MCF 10A (cell line): ENCODE measurements at regions of chr11 and their contacts with region 1.

Region 1: DNA sequence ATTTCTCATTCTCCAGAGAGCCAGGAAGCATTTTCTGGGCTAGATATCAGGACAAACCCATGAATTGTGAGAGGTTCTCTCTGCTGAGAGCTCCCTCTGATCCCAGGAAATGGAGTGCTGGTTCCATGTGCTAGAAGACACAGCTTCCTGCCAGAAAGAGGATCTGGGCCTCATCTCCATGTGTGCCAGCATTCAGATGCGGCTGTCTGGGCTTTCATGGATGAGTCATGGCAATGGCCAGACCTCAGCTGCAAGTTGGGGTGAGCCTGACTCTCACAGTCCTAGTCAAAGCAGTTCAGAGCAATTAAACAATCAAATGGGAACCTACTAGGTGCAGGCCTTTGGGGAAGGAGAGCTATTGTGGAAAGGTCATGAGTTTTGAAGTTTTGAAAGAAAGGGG is 82.3 kb upstream of the EED start:
- DNase-seq: peak; percentile 76
- H3K4me3 Mint-ChIP-seq: no peak overlapping the region
- H3K27ac Mint-ChIP-seq: peak overlapping the region; percentile 28
- H3K4me1 Mint-ChIP-seq: peaks cover 34% of the 10 kb centered on the region
- H3K27me3 Mint-ChIP-seq: no peaks in the 10 kb centered on the region
- CTCF ChIP-seq: no peak

Region 2: DNA sequence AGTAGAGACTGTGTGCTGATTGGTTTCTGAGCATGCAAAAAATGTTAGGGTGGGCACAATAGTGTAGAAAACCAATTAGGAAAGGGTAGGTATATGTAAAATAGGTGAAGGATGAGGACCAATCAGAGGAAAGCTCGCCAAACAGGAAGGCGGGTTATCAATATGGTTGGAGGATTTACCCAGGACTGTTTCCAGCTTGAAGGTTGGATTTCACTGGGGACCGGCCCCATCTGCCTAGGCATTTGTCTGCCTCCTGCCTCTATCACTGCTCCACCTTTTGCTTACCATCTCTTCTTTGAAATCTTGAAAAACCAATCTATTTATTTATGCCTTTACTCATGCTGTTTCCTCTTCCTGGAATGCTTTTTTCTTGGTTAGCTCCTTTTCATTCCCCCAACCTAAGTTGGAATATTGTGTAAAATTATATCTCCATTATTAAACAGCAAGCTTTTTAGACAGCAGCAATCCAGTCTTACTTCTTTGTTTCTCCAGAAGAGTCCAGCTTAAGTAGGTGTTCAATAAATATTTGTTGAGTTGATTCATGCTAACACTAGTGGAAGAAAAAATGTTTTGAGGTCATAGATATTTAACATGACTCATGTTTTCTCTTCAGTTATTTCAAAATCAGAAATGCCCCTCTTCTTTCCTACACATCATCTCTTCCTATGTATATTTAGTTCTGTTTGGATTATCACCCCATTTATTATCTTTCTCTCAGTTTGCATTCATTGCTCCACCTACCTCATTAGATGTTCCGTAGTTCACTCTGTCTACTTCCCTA is 286.9 kb before region 1 on chr11:
- CTCF ChIA-PET with region 1: no interaction called
- POLR2A ChIA-PET with region 1: no interaction called
- intact Hi-C with region 1: no loop called
- DNase-seq: peak; percentile 11
- H3K4me3 Mint-ChIP-seq: no peak overlapping the region
- H3K27ac Mint-ChIP-seq: no peak overlapping the region
- H3K4me1 Mint-ChIP-seq: peaks cover 19% of the 10 kb centered on the region
- H3K27me3 Mint-ChIP-seq: no peaks in the 10 kb centered on the region
- CTCF ChIP-seq: no peak

Region 3: DNA sequence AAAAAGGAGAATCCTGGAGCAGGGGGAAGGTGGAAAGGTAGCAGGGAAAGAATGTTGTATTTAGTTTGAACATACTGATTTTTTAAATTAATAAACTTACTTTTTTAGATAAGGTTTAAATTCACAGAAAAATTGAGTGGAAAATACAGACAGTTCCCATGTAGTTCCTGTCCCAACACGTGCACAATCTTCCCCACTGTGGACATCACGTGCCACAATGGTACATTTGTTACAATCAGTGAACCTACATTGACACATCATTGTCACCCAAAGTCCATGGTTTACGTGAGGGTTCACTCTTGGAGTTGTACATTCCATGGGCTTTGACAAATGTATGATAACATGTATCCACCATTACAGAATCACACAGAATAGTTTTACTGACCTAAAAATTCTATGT is 82.8 kb before region 1 on chr11:
- CTCF ChIA-PET with region 1: no interaction called
- POLR2A ChIA-PET with region 1: no interaction called
- intact Hi-C with region 1: no loop called
- DNase-seq: no peak
- H3K4me3 Mint-ChIP-seq: no peak overlapping the region
- H3K27ac Mint-ChIP-seq: no peak overlapping the region
- H3K4me1 Mint-ChIP-seq: no peaks in the 10 kb centered on the region
- H3K27me3 Mint-ChIP-seq: no peaks in the 10 kb centered on the region
- CTCF ChIP-seq: no peak

Region 4: DNA sequence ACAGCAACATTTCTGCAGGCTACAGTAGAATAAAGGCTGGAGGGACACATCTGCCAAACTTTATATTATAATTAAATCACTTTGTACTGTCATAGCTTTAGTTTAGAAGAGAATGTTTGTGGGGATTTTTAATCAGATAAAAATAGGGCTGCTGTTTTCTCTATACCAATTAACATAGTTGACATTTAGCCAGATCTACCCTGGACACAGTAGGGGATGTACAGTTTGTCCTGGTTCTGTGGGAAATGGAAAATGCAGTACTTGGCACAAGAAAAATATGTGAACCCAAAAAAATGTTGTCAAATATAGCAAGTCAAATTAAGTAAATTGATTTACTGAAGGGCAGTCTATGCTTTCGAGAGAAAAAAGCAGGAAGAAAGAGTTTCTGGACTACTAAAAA is 72.6 kb before region 1 on chr11:
- CTCF ChIA-PET with region 1: no interaction called
- POLR2A ChIA-PET with region 1: no interaction called
- intact Hi-C with region 1: no loop called
- DNase-seq: no peak
- H3K4me3 Mint-ChIP-seq: no peak overlapping the region
- H3K27ac Mint-ChIP-seq: no peak overlapping the region
- H3K4me1 Mint-ChIP-seq: no peaks in the 10 kb centered on the region
- H3K27me3 Mint-ChIP-seq: no peaks in the 10 kb centered on the region
- CTCF ChIP-seq: no peak

Region 5: DNA sequence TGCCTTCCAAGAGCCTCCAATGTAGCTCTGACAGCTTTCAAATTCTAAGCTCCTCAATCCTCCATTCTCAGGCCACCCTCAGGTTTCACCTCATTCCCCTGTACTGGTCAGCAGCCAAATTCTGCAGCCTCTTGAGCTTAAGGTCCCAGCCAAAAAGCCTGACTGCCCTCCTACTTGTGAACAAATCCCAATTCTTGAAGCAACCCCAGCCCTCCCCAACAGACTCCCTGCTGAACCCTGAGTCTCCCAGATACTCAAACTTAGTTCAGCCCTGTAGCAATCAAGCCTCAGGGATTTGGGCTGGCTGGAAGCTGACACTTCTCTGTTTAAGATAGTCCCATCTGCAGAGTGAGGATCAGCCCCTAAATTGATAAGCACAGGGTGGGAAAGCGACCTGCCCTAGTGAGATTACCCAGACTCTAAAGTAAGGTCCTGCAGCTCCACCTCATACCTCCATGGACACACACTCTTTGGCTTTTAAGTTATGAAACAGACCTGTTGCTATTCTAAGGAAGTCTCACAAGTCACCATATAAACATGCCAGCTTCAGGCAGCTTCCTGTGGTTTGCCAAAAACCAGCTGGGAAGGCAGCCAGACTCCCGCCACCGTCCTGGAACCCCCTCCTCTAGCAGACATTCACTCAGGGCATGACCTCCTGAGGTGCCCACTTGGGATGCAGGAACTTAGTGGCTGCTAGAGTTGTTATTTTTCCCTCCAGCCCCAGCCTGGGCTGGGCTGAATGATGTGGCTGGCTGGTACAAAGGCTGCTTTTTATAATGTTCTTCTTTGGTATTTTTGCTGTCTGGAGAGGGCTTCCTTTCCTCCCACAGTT is 10.8 kb before region 1 on chr11:
- CTCF ChIA-PET with region 1: no interaction called
- POLR2A ChIA-PET with region 1: interaction called, 18 read pairs
- intact Hi-C with region 1: no loop called
- DNase-seq: peak; percentile 55
- H3K4me3 Mint-ChIP-seq: no peak overlapping the region
- H3K27ac Mint-ChIP-seq: peak overlapping the region; percentile 23
- H3K4me1 Mint-ChIP-seq: peaks cover 20% of the 10 kb centered on the region
- H3K27me3 Mint-ChIP-seq: no peaks in the 10 kb centered on the region
- CTCF ChIP-seq: no peak

Region 6: DNA sequence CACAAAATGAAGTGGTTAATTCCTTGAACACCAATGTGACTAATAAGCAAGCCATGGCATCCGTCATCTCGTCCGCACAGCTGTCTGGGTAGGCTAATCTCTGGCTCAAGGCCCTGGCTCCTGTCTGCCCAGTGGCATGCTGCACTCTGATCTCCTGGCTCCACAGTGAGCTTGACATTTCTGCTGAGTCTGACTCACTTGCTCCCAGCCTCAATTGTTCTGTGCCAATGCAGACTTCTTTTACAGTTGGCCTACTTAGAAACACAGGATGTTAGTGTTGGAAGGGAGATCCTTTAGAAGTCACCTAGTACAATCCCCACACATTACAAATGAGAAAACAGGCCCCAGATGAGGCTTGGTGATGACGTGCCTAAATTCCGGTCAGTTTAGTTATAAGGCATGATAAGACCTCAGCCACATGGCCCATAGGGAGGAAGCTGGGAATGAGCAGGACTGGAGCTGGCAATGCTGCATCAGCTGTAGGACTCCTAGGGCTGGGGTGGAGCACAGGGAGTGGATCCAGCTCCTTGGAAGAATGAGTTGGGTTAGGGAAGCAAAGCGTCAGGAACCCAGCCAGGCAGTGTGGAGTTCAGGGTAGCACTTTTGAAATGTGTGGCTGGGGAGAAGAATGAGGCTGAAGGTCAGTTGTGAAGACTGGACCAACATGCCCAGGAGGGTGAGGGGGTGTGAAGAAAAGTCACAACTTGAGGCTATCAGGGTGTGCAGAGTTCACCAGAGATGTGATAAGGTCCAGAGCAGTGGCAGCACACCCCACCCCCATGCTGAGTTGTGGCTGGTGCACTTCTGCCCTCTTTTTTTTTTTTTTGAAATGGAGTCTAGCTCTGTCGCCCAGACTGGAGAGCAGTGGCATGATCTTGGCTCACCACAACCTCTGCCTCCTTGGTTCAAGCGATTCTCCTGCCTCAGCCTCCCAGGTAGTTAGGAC is 12.1 kb after region 1 on chr11:
- CTCF ChIA-PET with region 1: interaction called, 5 read pairs
- POLR2A ChIA-PET with region 1: interaction called, 44 read pairs
- intact Hi-C with region 1: no loop called
- DNase-seq: peak; percentile 93
- H3K4me3 Mint-ChIP-seq: no peak overlapping the region
- H3K27ac Mint-ChIP-seq: no peak overlapping the region
- H3K4me1 Mint-ChIP-seq: peaks cover 23% of the 10 kb centered on the region
- H3K27me3 Mint-ChIP-seq: no peaks in the 10 kb centered on the region
- CTCF ChIP-seq: no peak

Region 7: DNA sequence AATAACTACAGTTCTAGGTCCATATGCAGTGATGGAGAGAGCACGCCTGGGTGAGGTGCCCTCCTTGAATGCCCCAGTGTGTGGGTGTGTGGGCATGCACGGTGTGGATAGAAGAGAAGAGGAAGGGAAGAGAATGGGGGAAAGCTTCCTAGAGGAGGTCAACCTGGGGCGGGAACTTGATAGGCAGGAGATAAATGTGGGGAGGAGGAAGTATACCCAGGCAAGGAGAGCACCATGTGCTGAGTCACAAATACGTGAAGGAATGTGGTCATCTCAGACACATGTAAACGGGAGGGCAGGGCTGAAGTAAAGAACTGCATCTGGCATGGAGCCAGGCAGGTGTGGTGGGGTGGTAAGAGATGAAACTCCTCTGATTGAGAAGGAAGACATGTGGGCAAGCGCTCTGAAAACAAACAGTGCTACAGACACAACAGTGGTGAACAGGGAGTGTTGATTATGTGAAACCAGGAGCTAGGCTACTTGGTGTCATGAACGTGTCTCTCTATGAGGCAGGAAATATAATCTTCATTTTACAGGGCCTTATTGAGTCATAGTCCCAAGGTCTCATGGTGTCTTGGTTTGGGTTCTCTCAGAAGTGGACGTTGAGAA is 20.8 kb after region 1 on chr11:
- CTCF ChIA-PET with region 1: no interaction called
- POLR2A ChIA-PET with region 1: interaction called, 16 read pairs
- intact Hi-C with region 1: no loop called
- DNase-seq: peak; percentile 65
- H3K4me3 Mint-ChIP-seq: no peak overlapping the region
- H3K27ac Mint-ChIP-seq: no peak overlapping the region
- H3K4me1 Mint-ChIP-seq: no peaks in the 10 kb centered on the region
- H3K27me3 Mint-ChIP-seq: no peaks in the 10 kb centered on the region
- CTCF ChIP-seq: no peak

Region 8: GRCh38 chr11:86244522-86245368 is 82.5 kb after region 1 on chr11 and contains the start of gene EED:
- CTCF ChIA-PET with region 1: interaction called, 3 read pairs
- POLR2A ChIA-PET with region 1: interaction called, 10 read pairs
- intact Hi-C with region 1: no loop called
- DNase-seq: peak; percentile 91
- H3K4me3 Mint-ChIP-seq: no peak within 1 kb of the TSS
- H3K27ac Mint-ChIP-seq: no peak within 1 kb of the TSS
- H3K4me1 Mint-ChIP-seq: peaks cover 30% of the 10 kb centered on the region
- H3K27me3 Mint-ChIP-seq: no peaks in the 10 kb centered on the region
- CTCF ChIP-seq: no peak
- total RNA-seq, gene EED: 20.9 and 22.9 TPM in 2 replicates